A549 (cell line): ENCODE measurements at regions of chr15 and their contacts with region 1.

Region 1: GRCh38 chr15:59501597-59501996 is 63.6 kb downstream of the FAM81A start:
- DNase-seq: peak; percentile 80 to 90
- ATAC-seq: peak; percentile 95 to 97
- H3K4me3 ChIP-seq: no peak overlapping the region
- H3K27ac ChIP-seq: no peak overlapping the region
- H3K4me1 ChIP-seq: no peaks in the 10 kb centered on the region
- CTCF ChIP-seq: peak; percentile 98
- EP300 ChIP-seq: no peak
- POLR2A ChIP-seq: no peak
- RAD21 ChIP-seq: peak; percentile 95 to 97

Region 2: DNA sequence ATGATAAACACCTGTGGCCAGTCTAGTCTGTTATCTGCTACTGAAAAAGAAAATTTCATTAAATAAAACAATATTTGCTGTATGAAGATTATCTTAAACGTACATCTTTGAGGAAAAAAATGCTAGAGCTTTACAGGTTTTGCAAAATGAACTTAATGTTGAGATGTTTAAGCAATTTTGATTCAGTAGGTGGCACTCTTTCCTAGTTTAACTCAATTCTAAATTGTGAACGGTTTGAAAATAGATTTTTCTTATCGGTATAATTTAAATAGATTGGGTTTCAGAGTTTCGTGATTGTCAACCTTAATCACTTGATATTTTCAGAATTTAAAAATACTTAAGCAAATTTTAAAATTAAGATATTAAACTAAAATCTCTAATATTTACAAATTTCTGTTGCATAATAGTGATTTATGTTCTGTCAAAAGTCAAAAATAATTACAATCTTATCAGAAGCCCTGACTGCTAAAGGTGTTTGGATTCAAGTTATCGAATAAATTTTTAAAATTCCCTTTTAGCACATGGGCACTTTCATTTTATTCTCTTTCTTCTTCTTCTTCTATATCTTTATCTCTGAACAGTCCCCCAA is 521.2 kb before region 1 on chr15:
- CTCF ChIA-PET with region 1: interaction called, 47 read pairs
- POLR2A ChIA-PET with region 1: no interaction called
- DNase-seq: peak; percentile 43 to 50
- ATAC-seq: peak in 1 of 2 experiments; percentile 55; a peak in 1 of 6 replicates
- H3K4me3 ChIP-seq: no peak overlapping the region
- H3K27ac ChIP-seq: no peak overlapping the region
- H3K4me1 ChIP-seq: no peaks in the 10 kb centered on the region
- CTCF ChIP-seq: peak; percentile 87
- EP300 ChIP-seq: no peak
- POLR2A ChIP-seq: no peak
- RAD21 ChIP-seq: peak; percentile 83 to 91

Region 3: DNA sequence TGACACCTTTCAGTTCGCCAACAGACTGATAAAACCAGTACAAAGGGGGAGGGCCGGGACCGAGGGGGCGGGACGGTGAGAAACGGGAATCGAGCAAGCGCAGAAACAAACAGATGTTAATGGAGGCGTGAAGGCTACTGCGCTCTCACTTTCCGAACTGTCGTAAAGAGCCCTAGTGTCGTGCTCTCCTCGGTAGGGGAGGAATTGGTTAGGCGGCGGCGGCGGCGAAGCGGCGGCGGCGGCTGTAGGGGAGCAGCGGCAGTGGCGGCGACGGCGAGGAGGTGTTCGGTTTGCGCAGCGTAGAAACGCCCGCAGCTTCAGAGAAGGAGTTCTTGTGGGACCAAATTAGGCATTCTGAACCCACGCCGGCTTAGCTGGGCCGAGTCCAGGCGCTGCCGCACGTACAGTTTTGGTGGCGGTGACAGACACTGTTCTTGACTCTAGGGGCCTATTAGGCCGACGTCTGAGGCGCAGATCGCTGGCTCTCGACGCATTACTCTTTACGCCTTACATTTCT is 514.0 kb before region 1 on chr15 and contains the start of gene RNF111:
- CTCF ChIA-PET with region 1: interaction called, 16 read pairs
- POLR2A ChIA-PET with region 1: no interaction called
- DNase-seq: peak; percentile 98 to 99
- ATAC-seq: peak; percentile 89 to 93
- H3K4me3 ChIP-seq: peak within 1 kb of the TSS; percentile 69
- H3K27ac ChIP-seq: peak within 1 kb of the TSS; percentile 88 to 96
- H3K4me1 ChIP-seq: peaks cover 18% of the 10 kb centered on the region; the same call in 2 of the 3 replicates
- CTCF ChIP-seq: no peak
- EP300 ChIP-seq: no peak
- POLR2A ChIP-seq: peak; percentile 67
- RAD21 ChIP-seq: no peak
- polyA plus RNA-seq, gene RNF111: 42.7 and 46.9 TPM in 2 replicates

Region 4: GRCh38 chr15:59160880-59161593 is 340.6 kb before region 1 on chr15:
- CTCF ChIA-PET with region 1: interaction called, 17 read pairs
- POLR2A ChIA-PET with region 1: no interaction called
- DNase-seq: peak; percentile 41 to 59
- ATAC-seq: peak; percentile 81 to 84
- H3K4me3 ChIP-seq: no peak overlapping the region
- H3K27ac ChIP-seq: peak overlapping the region in 1 of 2 experiments; percentile 22; a peak in 1 of 6 replicates
- H3K4me1 ChIP-seq: peaks cover 6% of the 10 kb centered on the region
- CTCF ChIP-seq: peak; percentile 62
- EP300 ChIP-seq: no peak
- POLR2A ChIP-seq: no peak
- RAD21 ChIP-seq: peak; percentile 76 to 87

Region 5: DNA sequence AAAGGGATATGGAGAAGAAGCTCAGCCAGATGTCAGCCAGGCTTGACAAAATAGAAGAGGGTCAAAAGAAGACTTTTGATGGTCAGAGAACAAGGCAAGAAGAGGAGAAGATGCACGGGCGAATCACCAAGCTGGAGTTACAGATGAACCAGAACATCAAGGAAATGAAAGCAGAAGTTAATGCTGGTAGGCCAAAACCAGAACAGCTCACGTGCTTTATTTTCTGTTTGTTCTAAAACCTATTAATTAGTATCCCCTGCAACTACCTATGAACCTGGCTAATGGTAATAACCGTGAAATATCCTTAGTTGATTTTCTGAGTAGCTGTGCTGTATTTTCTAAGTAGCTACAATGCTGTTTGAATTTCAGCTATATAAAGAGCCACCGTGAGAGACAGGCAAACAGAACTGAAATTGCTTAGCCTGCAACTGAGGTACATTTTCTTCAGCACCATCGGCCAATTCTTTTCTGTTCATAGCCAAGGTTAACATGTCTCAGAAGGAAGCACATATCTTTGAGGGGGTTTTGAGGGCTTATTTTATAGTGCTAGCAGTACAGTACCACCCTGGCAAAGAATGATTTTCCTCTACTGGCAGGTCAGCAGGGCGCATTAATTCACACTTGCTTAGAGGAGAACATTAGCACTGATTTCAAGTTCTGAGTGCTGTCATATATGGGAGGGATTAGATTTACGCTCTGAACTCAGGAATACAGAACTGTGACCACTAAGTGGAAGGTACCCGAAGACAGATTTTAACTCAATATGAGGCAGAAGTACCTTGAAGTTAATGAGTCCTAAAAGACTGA is 15.3 kb after region 1 on chr15:
- CTCF ChIA-PET with region 1: interaction called, 87 read pairs
- POLR2A ChIA-PET with region 1: no interaction called
- DNase-seq: no peak
- ATAC-seq: 0 out of 6 replicates have a peak, but pooled peaks of 1 of the 2 experiments have one; percentile 24
- H3K4me3 ChIP-seq: no peak overlapping the region
- H3K27ac ChIP-seq: no peak overlapping the region
- H3K4me1 ChIP-seq: no peaks in the 10 kb centered on the region
- CTCF ChIP-seq: no peak
- EP300 ChIP-seq: no peak
- POLR2A ChIP-seq: no peak
- RAD21 ChIP-seq: no peak

Region 6: GRCh38 chr15:59522988-59523461 is 21.4 kb after region 1 on chr15:
- CTCF ChIA-PET with region 1: interaction called, 87 read pairs
- POLR2A ChIA-PET with region 1: no interaction called
- DNase-seq: no peak
- ATAC-seq: no peak
- H3K4me3 ChIP-seq: no peak overlapping the region
- H3K27ac ChIP-seq: no peak overlapping the region
- H3K4me1 ChIP-seq: no peaks in the 10 kb centered on the region
- CTCF ChIP-seq: no peak
- EP300 ChIP-seq: no peak; a peak in 1 of 5 replicates
- POLR2A ChIP-seq: no peak
- RAD21 ChIP-seq: no peak

Region 7: DNA sequence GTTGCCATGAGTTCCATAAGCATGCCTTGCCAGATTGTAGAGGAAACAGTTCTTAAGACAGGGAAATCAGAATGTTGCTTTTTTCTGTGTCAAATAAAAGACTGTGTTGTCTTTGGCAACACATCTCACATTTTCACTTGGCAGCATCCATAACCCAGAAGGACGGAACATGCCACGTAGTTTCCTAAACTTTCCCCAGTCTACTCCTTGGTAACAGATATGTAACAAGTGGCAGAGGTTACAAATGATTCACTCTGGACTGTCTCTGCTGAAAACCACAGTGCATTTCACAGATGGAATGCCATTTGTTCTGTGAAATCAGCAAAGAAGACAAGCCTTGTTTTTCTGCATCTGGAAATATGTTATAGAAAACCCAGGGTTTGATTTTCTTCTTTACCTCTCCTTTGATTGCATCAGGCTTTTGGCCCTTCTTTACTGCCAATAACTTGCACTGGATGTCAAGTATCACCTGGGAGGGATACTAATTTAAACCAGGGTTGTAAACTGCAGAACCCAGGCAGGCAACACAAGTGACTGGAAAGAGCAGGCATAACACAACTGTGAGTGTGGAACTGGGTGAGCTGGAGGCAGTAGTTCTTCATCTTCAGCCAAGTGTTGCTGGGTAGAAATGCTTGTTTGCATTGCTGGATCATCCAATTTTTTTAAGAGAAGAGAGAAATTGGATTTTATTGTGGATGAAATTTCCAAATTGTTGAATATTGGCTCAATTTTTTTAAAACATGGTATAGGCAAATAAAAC is 378.1 kb after region 1 on chr15:
- CTCF ChIA-PET with region 1: no interaction called
- POLR2A ChIA-PET with region 1: no interaction called
- DNase-seq: no peak
- ATAC-seq: no peak
- H3K4me3 ChIP-seq: no peak overlapping the region
- H3K27ac ChIP-seq: no peak overlapping the region
- H3K4me1 ChIP-seq: no peaks in the 10 kb centered on the region
- CTCF ChIP-seq: no peak
- EP300 ChIP-seq: no peak
- POLR2A ChIP-seq: no peak
- RAD21 ChIP-seq: no peak